B cell (primary cell): ENCODE measurements at regions of chr9 and their contacts with region 1.

Region 1: GRCh38 chr9:35696525-35697215 is 6.9 kb upstream of the TPM2 start:
- DNase-seq: peak; percentile 78
- ATAC-seq: peak; percentile 97
- H3K4me3 ChIP-seq: no peak overlapping the region
- H3K4me3 Mint-ChIP-seq: no peak overlapping the region
- H3K27ac ChIP-seq: no peak overlapping the region
- H3K27ac Mint-ChIP-seq: peak overlapping the region; percentile 79
- H3K4me1 ChIP-seq: peaks cover 0 to 7% of the 10 kb centered on the region in 2 donors
- H3K4me1 Mint-ChIP-seq: peaks cover 8% of the 10 kb centered on the region
- H3K27me3 ChIP-seq: no peaks in the 10 kb centered on the region
- H3K27me3 Mint-ChIP-seq: no peaks in the 10 kb centered on the region
- CTCF ChIP-seq: peak; percentile 91

Region 2: GRCh38 chr9:35611230-35611797 is 85.4 kb before region 1 on chr9:
- CTCF ChIA-PET with region 1: interaction called, 175 read pairs
- POLR2A ChIA-PET with region 1: interaction called, 4 read pairs
- intact Hi-C with region 1: no loop called
- DNase-seq: peak; percentile 72
- ATAC-seq: peak; percentile 90
- H3K4me3 ChIP-seq: no peak overlapping the region
- H3K4me3 Mint-ChIP-seq: no peak overlapping the region
- H3K27ac ChIP-seq: peak overlapping the region in 1 of 2 donors; percentile 45
- H3K27ac Mint-ChIP-seq: peak overlapping the region; percentile 77
- H3K4me1 ChIP-seq: peaks cover 59 to 85% of the 10 kb centered on the region in 2 donors
- H3K4me1 Mint-ChIP-seq: peaks cover 67% of the 10 kb centered on the region
- H3K27me3 ChIP-seq: no peaks in the 10 kb centered on the region
- H3K27me3 Mint-ChIP-seq: no peaks in the 10 kb centered on the region
- CTCF ChIP-seq: peak; percentile 76

Region 3: DNA sequence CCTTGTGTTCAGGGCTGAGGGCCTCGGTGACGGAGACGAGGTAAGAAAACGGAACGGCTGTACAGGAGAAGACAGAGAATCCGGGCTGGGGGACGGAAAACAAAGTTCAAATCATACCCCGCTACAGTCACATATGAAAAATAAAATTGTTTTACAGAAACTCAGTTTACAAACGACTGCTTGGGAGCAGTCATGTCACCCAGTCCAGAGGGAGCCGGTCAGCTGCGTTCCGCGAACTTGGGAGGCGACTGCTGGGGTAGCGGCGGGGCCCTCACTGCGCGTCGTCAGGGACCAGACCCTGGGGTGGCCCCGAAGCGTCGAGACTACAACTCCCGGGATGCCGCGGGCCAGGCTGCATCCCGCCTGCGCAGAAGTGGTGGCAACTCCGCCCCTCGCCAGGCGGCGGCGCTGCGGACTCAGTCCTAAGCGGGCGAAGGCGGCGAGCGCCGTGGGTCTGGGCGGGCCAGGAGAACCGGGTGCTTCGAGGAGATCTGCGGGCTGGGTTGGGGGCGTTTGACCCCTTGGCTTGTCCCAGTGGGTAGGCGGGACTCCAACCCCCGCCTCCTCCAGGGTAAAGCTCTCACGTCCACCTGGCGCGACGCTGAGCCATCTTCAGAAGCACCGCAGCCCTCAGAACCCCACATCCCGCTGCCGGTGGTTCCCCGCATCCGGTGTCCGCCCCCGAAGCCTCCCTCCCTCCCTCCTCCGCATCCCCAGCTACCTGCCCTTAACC is 50.0 kb before region 1 on chr9:
- CTCF ChIA-PET with region 1: interaction called, 52 read pairs
- POLR2A ChIA-PET with region 1: interaction called, 9 read pairs
- intact Hi-C with region 1: loop called (anchors 1 kb)
- DNase-seq: peak; percentile 95
- ATAC-seq: peak; percentile 89
- H3K4me3 ChIP-seq: peak overlapping the region; percentile 76 to 90 (median 84)
- H3K4me3 Mint-ChIP-seq: peak overlapping the region; percentile 97
- H3K27ac ChIP-seq: peak overlapping the region; percentile 88 to 95
- H3K27ac Mint-ChIP-seq: peak overlapping the region; percentile 97
- H3K4me1 ChIP-seq: peaks cover 76 to 92% of the 10 kb centered on the region in 2 donors
- H3K4me1 Mint-ChIP-seq: peaks cover 81% of the 10 kb centered on the region
- H3K27me3 ChIP-seq: no peaks in the 10 kb centered on the region
- H3K27me3 Mint-ChIP-seq: no peaks in the 10 kb centered on the region
- CTCF ChIP-seq: peak; percentile 94

Region 4: GRCh38 chr9:35716230-35716629 is 19.6 kb after region 1 on chr9:
- CTCF ChIA-PET with region 1: interaction called, 195 read pairs
- POLR2A ChIA-PET with region 1: no interaction called
- intact Hi-C with region 1: no loop called
- DNase-seq: no peak
- ATAC-seq: no peak
- H3K4me3 ChIP-seq: no peak overlapping the region
- H3K4me3 Mint-ChIP-seq: no peak overlapping the region
- H3K27ac ChIP-seq: no peak overlapping the region
- H3K27ac Mint-ChIP-seq: peak overlapping the region; percentile 65
- H3K4me1 ChIP-seq: peaks cover 16 to 24% of the 10 kb centered on the region in 2 donors
- H3K4me1 Mint-ChIP-seq: peaks cover 26% of the 10 kb centered on the region
- H3K27me3 ChIP-seq: no peaks in the 10 kb centered on the region
- H3K27me3 Mint-ChIP-seq: no peaks in the 10 kb centered on the region
- CTCF ChIP-seq: no peak

Region 5: DNA sequence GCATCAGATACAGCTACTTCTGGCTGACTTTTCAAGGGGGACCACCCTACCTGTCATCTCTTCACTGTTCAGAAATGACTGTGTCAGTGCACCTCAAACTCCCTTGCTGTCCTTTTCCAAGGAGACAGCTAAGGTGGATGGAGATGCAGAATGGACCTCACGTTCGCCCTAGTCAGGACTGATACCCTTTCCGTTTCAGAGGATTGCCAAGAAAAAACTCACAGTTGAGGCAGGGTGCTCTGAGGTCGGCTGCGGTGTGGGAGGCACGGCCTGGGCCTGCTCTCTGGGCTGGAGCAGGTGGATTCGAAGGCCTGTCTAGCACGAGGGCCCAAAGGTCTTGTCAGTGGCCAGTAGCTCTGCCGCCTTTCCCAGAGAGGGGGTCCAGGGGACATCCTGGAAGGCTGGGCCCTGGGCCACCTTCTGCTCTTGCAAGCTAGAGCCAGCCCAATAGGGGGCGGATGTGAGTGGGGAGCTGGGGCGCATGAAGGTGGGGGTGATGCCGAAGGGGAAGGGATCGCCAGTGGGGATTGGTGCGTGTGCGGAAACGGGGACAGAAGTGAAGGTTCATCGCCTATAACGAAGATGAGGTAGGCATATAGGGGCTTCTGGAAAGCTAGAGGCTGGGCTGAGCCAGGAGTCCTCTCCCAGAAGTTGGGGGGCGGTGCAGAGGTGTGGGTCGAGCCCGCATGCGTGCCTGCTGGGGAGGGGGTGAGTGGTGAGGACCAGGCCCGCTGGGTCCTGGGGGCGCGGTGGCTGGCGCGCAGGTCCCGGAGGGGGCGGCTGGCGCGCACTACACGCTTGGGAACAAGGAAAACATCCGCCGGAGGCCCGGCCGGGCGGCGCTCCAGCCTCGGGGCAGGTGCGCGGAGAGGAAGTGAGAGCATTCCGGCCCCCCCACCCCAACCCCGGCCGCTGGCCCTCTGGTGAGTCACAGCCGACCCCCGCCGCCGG is 59.9 kb after region 1 on chr9:
- CTCF ChIA-PET with region 1: interaction called, 14 read pairs
- POLR2A ChIA-PET with region 1: no interaction called
- intact Hi-C with region 1: no loop called
- DNase-seq: peak; percentile 84
- ATAC-seq: peak; percentile 80
- H3K4me3 ChIP-seq: peak overlapping the region; percentile 39 to 85 (median 81)
- H3K4me3 Mint-ChIP-seq: peak overlapping the region; percentile 93
- H3K27ac ChIP-seq: peak overlapping the region; percentile 92 to 94
- H3K27ac Mint-ChIP-seq: peak overlapping the region; percentile 97
- H3K4me1 ChIP-seq: peaks cover 34 to 44% of the 10 kb centered on the region in 2 donors
- H3K4me1 Mint-ChIP-seq: peaks cover 65% of the 10 kb centered on the region
- H3K27me3 ChIP-seq: no peaks in the 10 kb centered on the region
- H3K27me3 Mint-ChIP-seq: no peaks in the 10 kb centered on the region
- CTCF ChIP-seq: peak; percentile 70

Region 6: DNA sequence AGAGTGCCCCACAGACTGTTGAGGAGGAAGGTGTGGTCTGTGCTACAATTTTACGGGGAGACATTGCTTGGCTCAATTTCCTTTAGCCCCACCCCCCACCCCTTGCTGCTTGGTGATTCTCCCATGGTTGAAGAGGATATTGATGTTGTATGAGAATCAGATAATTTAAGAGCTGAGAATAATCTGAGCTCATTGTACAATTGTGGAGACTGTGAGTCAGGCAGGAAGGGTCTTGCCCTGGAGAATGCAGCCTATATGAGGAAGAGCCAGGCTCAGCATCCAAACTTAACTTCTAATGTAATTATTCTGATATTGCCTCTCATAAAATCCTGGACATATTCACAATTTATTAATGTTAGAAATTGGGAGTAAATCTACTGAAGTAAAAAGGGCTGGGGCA is 287.4 kb after region 1 on chr9:
- CTCF ChIA-PET with region 1: no interaction called
- POLR2A ChIA-PET with region 1: no interaction called
- intact Hi-C with region 1: no loop called
- DNase-seq: no peak
- ATAC-seq: no peak
- H3K4me3 ChIP-seq: no peak overlapping the region
- H3K4me3 Mint-ChIP-seq: no peak overlapping the region
- H3K27ac ChIP-seq: no peak overlapping the region
- H3K27ac Mint-ChIP-seq: no peak overlapping the region
- H3K4me1 ChIP-seq: no peaks in the 10 kb centered on the region
- H3K4me1 Mint-ChIP-seq: no peaks in the 10 kb centered on the region
- H3K27me3 ChIP-seq: peaks cover 0 to 10% (median 2%) of the 10 kb centered on the region in 4 experiments
- H3K27me3 Mint-ChIP-seq: peaks cover 49% of the 10 kb centered on the region
- CTCF ChIP-seq: no peak

Region 7: GRCh38 chr9:36163049-36163785 is 466.5 kb after region 1 on chr9:
- CTCF ChIA-PET with region 1: no interaction called
- POLR2A ChIA-PET with region 1: no interaction called
- intact Hi-C with region 1: no loop called
- DNase-seq: no peak
- ATAC-seq: no peak
- H3K4me3 ChIP-seq: no peak overlapping the region
- H3K4me3 Mint-ChIP-seq: no peak overlapping the region
- H3K27ac ChIP-seq: no peak overlapping the region
- H3K27ac Mint-ChIP-seq: no peak overlapping the region
- H3K4me1 ChIP-seq: peaks cover 0 to 10% of the 10 kb centered on the region in 2 donors
- H3K4me1 Mint-ChIP-seq: peaks cover 3% of the 10 kb centered on the region
- H3K27me3 ChIP-seq: no peaks in the 10 kb centered on the region
- H3K27me3 Mint-ChIP-seq: no peaks in the 10 kb centered on the region
- CTCF ChIP-seq: no peak